ENCODE measurements at regions of chr6 and their contacts with region 1.

Region 1: GRCh38 chr6:130113201-130113710 is 94.9 kb downstream of the L3MBTL3 start:
- DNase-seq: no peak
- H3K4me3 ChIP-seq: no peak overlapping the region
- H3K4me3 Mint-ChIP-seq: no peak overlapping the region
- H3K27ac ChIP-seq: no peak overlapping the region
- H3K27ac Mint-ChIP-seq: no peak overlapping the region
- H3K4me1 ChIP-seq: no peaks in the 10 kb centered on the region
- H3K4me1 Mint-ChIP-seq: peaks cover 17 to 19% (median 18%) of the 10 kb centered on the region in 3 donors
- H3K27me3 ChIP-seq: no peaks in the 10 kb centered on the region
- H3K27me3 Mint-ChIP-seq: no peaks in the 10 kb centered on the region

Region 2: DNA sequence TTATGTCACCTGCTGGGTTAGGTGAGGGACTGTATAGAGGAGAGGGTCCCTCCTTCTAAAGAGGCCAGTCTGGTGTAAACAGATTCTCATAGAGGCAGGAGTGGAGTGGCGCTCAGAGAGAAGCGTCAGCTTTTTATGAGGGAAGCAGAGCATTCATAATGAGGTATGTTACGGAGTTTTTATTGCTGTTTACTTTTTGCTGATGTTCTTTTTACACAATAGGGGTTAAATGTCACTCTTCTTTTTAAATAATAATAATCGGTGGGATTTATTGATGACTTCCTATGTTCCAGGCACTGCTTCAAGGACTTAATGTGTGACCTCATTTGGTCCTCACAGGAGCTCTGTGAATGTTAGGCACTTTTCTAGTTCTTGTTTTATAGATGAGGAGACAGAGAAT is 14.9 kb before region 1 on chr6:
- CTCF ChIA-PET with region 1: no interaction called
- POLR2A ChIA-PET with region 1: interaction called, 11 read pairs
- DNase-seq: no peak
- H3K4me3 ChIP-seq: no peak overlapping the region
- H3K4me3 Mint-ChIP-seq: peak overlapping the region in 1 of 7 donors; percentile 13
- H3K27ac ChIP-seq: no peak overlapping the region
- H3K27ac Mint-ChIP-seq: peak overlapping the region in 1 of 8 donors; percentile 65
- H3K4me1 ChIP-seq: peaks cover 4% of the 10 kb centered on the region
- H3K4me1 Mint-ChIP-seq: peaks cover 11 to 44% (median 29%) of the 10 kb centered on the region in 3 donors
- H3K27me3 ChIP-seq: no peaks in the 10 kb centered on the region
- H3K27me3 Mint-ChIP-seq: peaks cover 0 to 3% of the 10 kb centered on the region in 2 donors

Region 3: DNA sequence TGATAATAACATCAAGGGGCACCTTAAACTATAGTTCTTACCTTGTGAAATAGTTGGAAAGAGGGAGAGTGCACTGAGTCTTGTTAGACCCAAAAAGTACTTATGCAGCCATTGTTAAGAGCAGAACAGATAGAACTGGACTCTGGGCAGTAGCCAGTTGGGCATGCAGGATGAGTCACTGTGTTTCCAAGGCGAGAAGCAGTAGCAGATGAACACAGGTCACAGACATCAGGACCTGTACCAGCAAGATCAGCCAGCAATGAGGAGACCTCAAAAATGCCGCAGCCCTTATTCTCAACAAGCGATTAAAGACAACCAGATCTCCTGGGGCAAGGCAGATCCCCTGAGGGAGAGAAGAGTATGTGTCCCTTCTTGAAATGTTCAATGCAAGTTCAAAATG is 30.5 kb after region 1 on chr6:
- CTCF ChIA-PET with region 1: no interaction called
- POLR2A ChIA-PET with region 1: no interaction called
- DNase-seq: no peak
- H3K4me3 ChIP-seq: no peak overlapping the region
- H3K4me3 Mint-ChIP-seq: no peak overlapping the region
- H3K27ac ChIP-seq: no peak overlapping the region
- H3K27ac Mint-ChIP-seq: peak overlapping the region in 7 of 8 donors; percentile 11 to 94 (median 55)
- H3K4me1 ChIP-seq: peaks cover 11% of the 10 kb centered on the region
- H3K4me1 Mint-ChIP-seq: peaks cover 39 to 70% (median 57%) of the 10 kb centered on the region in 3 donors
- H3K27me3 ChIP-seq: no peaks in the 10 kb centered on the region
- H3K27me3 Mint-ChIP-seq: peaks cover 0 to 2% of the 10 kb centered on the region in 2 donors

Measured in CD8-positive, alpha-beta memory T cell (primary cell).